CD14-positive monocyte (primary cell): ENCODE measurements at regions of chr21 and their contacts with region 1.

Region 1: GRCh38 chr21:29671728-29672127 is 268.1 kb downstream of the GRIK1 start:
- DNase-seq: no peak
- H3K4me3 ChIP-seq: no peak overlapping the region
- H3K4me3 Mint-ChIP-seq: no peak overlapping the region
- H3K27ac ChIP-seq: no peak overlapping the region
- H3K27ac Mint-ChIP-seq: no peak overlapping the region
- H3K4me1 ChIP-seq: peaks cover 16 to 18% of the 10 kb centered on the region in 2 donors
- H3K4me1 Mint-ChIP-seq: peaks cover 21% of the 10 kb centered on the region
- H3K27me3 ChIP-seq: no peaks in the 10 kb centered on the region
- H3K27me3 Mint-ChIP-seq: no peaks in the 10 kb centered on the region
- CTCF ChIP-seq: peak; percentile 17

Region 2: DNA sequence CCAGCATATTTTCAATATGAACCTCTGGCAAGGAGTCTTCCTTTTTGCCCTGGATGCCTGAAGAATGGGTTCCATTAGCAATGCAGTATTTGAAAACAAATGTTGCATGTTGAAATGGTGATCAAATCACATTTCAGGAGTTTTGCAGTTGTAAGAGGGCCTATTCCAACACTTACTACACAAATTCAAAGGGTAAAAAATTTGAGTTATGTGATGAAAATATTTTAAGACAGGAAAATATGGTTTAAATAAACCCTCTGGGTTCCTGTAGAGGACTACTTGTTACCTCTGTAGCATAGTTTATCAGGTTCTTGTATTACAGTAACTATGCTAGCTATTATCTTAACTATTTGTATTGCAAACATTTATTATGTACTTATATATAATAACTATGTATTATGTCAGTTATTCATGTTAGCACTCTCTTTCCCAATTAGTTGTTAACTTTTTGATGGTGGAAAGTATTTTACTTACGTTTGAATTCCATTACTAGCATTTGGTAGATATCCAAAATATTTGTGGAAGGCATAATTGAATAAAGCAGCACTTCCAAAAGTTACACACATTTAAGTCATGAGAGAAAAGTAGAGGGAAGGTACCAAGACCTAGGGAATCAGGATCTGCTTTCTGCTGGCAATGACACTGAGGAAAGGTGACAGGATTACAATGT is 44.8 kb before region 1 on chr21:
- intact Hi-C with region 1: loop called in 1 of 2 experiments (anchors 5 kb)
- DNase-seq: no peak
- H3K4me3 ChIP-seq: no peak overlapping the region
- H3K4me3 Mint-ChIP-seq: no peak overlapping the region
- H3K27ac ChIP-seq: no peak overlapping the region
- H3K27ac Mint-ChIP-seq: no peak overlapping the region
- H3K4me1 ChIP-seq: peaks cover 2 to 5% of the 10 kb centered on the region in 2 donors
- H3K4me1 Mint-ChIP-seq: peaks cover 11% of the 10 kb centered on the region
- H3K27me3 ChIP-seq: no peaks in the 10 kb centered on the region
- H3K27me3 Mint-ChIP-seq: no peaks in the 10 kb centered on the region
- CTCF ChIP-seq: no peak